ENCODE measurements at regions of chr3 and their contacts with region 1.

Region 1: DNA sequence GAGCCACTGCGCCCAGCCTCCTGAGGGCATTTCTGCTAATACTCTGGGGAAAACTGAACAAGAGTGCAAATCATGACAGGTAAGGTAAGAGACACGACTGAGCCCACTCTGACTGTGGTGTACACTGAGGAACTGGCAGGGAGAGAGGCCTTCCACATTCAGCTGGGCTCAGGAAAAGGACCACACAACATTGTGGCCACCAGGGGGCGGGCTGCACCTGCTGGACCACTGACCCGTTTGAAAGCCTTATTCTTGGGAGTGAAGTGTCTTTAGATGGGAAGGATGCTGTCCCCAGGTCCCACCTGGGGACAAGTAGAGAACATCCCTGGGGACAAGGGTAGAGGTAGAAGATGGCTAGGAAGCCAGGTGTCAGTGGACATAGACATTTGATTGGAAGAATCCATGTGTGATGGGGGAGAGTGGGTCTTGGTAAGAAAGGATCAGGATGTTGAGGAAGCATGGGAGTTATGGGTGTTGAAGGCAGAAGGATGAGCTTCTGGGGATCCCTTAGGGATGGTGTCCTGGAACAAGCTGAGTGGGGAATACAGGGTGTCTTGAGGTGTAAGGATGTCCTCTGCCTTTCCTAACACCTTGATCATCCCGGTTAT is 6.2 kb upstream of the CTDSPL start:
- DNase-seq: peak; percentile 60
- H3K4me3 ChIP-seq: no peak overlapping the region
- H3K27ac ChIP-seq: no peak overlapping the region
- H3K4me1 ChIP-seq: peaks cover 61% of the 10 kb centered on the region
- H3K27me3 ChIP-seq: no peaks in the 10 kb centered on the region
- CTCF ChIP-seq: peak; percentile 87 to 89

Region 2: GRCh38 chr3:37912052-37912733 is 56.7 kb after region 1 on chr3:
- CTCF ChIA-PET with region 1: no interaction called
- dilution Hi-C with region 1: no loop called
- in situ Hi-C with region 1: no loop called
- intact Hi-C with region 1: loop called (anchors 2 kb)
- DNase-seq: peak; percentile 7
- H3K4me3 ChIP-seq: no peak overlapping the region
- H3K27ac ChIP-seq: no peak overlapping the region
- H3K4me1 ChIP-seq: peaks cover 15% of the 10 kb centered on the region
- H3K27me3 ChIP-seq: no peaks in the 10 kb centered on the region
- CTCF ChIP-seq: peak; percentile 11 to 38

Region 3: DNA sequence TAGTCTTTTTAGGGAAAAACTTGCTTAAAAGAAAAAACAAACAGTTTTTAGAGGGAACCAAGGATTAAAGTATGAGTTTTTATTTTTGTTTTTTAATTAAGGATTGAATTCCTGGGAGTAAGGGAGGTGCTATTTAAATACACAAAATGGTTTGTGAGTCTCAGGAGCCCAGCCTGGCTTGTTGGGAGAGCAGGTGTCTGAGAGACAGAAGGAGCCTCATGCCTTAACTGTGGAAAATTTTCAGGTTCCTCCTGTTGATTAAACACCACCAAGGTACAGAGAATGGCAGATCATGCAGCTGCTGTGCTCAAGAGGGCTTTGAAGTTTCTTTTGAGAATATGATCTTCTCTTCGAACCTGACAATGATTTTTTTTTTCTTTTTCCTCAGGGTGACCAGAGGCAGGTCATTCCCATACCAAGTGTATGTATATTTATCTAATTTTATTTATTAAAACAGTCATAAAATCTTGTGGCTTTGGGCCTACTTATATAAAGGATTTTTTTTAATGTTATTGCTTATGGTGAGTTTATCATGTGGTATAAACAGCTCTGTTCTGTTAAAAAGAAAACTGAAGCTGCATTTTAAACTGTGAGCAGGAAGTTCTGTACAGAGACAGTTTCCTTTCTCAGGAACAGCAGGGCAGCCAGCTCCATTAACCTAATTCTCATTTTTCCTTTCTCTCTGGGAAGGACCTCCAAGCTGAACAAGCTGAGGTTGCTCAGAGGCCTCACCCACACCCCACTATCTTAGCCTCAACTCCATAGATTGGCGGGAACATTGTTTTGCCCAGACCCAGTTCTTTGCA is 101.5 kb after region 1 on chr3:
- CTCF ChIA-PET with region 1: no interaction called
- dilution Hi-C with region 1: no loop called
- in situ Hi-C with region 1: loop called (anchors 5 kb)
- intact Hi-C with region 1: no loop called
- DNase-seq: no peak
- H3K4me3 ChIP-seq: no peak overlapping the region
- H3K27ac ChIP-seq: no peak overlapping the region
- H3K4me1 ChIP-seq: no peaks in the 10 kb centered on the region
- H3K27me3 ChIP-seq: no peaks in the 10 kb centered on the region
- CTCF ChIP-seq: no peak

Region 4: DNA sequence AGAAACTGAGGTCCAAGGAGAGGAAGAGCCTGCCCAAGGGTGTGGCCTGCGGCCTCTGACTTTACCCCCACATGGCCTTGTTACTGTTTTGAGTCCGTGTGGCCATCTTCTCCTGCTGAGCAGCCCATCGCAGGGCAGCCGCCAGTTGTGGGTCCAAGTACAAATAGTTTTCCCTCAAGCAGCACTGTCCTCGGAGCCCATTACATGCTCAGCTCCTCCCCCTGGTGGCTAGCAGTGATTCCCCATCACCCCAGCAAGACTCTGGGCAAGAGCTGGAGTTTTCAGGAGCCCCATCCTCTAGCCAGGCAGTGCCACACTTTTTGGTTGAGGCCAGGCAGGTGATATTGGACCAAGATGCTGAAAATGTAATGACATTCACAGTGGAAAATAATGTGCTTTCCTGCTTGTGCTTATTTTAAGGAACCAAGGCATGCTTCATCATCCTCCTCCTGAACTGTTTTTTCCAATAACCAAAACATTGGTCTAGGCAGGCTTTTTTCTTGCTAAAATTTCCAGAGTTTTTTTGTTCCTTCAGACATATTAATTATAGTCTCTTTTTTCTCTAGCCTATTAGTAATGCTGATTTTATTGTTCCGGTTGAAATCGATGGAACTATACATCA is 111.9 kb after region 1 on chr3:
- CTCF ChIA-PET with region 1: interaction called, 10 read pairs
- dilution Hi-C with region 1: no loop called
- in situ Hi-C with region 1: loop called in 1 of 2 experiments (anchors 5 kb)
- intact Hi-C with region 1: loop called (anchors 1 kb)
- DNase-seq: peak; percentile 45
- H3K4me3 ChIP-seq: no peak overlapping the region
- H3K27ac ChIP-seq: no peak overlapping the region
- H3K4me1 ChIP-seq: no peaks in the 10 kb centered on the region
- H3K27me3 ChIP-seq: no peaks in the 10 kb centered on the region
- CTCF ChIP-seq: peak; percentile 78 to 90

Region 5: GRCh38 chr3:37996785-37997301 is 141.4 kb after region 1 on chr3:
- CTCF ChIA-PET with region 1: no interaction called
- dilution Hi-C with region 1: no loop called
- in situ Hi-C with region 1: no loop called
- intact Hi-C with region 1: loop called (anchors 1 kb)
- DNase-seq: peak; percentile 75
- H3K4me3 ChIP-seq: no peak overlapping the region
- H3K27ac ChIP-seq: no peak overlapping the region
- H3K4me1 ChIP-seq: peaks cover 40% of the 10 kb centered on the region
- H3K27me3 ChIP-seq: no peaks in the 10 kb centered on the region
- CTCF ChIP-seq: peak; percentile 91 to 98

Measured in mammary epithelial cell (primary cell).